ENCODE measurements at regions of chr2 and their contacts with region 1.

Region 1: DNA sequence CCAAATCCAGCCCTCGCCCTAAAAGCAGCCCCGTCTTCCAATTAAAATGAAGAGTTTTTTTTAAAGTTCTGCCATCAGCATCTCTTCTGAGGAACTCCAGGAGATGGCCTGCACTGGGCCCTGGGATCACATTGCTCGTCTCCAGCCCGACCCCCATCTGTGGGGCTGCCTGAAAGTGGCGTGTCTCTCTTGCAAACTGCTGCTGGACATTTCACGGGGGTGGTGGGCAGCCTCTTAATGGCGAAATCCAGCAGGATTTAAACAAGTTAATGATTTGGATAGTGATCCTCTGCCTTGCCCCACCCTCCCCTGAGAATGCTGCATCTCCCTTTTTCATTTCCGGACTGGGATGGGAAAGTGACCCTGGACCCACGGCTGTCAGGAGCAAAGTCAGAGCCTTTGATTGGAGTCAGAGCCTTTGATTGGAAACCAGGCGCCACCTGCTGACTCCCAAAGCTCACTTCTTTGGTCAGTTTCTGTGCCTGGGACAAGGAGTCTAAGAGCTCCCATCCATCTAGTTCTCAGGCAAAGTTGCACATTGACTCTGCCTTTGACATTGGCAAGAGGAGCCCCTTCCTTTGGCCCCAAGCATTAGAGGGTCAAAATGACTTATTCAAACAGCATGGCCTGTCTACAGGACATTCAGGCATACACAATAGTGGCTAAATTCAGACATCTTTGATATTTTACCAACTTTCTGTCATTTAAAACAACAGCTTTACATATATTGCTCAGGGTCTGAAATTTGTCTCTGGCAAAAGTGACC is 155.2 kb downstream of the SH3BP4 start:
- DNase-seq: peak; percentile 74 to 83 (median 79)
- ATAC-seq: peak; percentile 74
- H3K4me3 ChIP-seq: no peak overlapping the region
- H3K27ac ChIP-seq: no peak overlapping the region
- H3K4me1 ChIP-seq: no peaks in the 10 kb centered on the region
- H3K27me3 ChIP-seq: no peaks in the 10 kb centered on the region
- CTCF ChIP-seq: peak; percentile 25 to 83 (median 82)
- POLR2A ChIP-seq: no peak

Region 2: GRCh38 chr2:234550511-234551107 is 556.4 kb before region 1 on chr2:
- intact Hi-C with region 1: loop called (anchors 5 kb)
- DNase-seq: peak; percentile 62 to 66 (median 64)
- ATAC-seq: peak; percentile 72
- H3K4me3 ChIP-seq: no peak overlapping the region
- H3K27ac ChIP-seq: no peak overlapping the region
- H3K4me1 ChIP-seq: no peaks in the 10 kb centered on the region
- H3K27me3 ChIP-seq: no peaks in the 10 kb centered on the region
- CTCF ChIP-seq: peak; percentile 82 to 97 (median 92)
- POLR2A ChIP-seq: no peak